ENCODE measurements at regions of chr1 and their contacts with region 1.

Region 1: GRCh38 chr1:205255941-205256780 is 28.4 kb downstream of the TMCC2 start:
- DNase-seq: peak; percentile 86 to 96 (median 94)
- ATAC-seq: peak; percentile 98 to 100 (median 98)
- H3K4me3 ChIP-seq: no peak overlapping the region
- H3K27ac ChIP-seq: no peak overlapping the region
- H3K4me1 ChIP-seq: no peaks in the 10 kb centered on the region
- H3K27me3 ChIP-seq: no peaks in the 10 kb centered on the region
- CTCF ChIP-seq: peak; percentile 86 to 95 (median 92)

Region 2: DNA sequence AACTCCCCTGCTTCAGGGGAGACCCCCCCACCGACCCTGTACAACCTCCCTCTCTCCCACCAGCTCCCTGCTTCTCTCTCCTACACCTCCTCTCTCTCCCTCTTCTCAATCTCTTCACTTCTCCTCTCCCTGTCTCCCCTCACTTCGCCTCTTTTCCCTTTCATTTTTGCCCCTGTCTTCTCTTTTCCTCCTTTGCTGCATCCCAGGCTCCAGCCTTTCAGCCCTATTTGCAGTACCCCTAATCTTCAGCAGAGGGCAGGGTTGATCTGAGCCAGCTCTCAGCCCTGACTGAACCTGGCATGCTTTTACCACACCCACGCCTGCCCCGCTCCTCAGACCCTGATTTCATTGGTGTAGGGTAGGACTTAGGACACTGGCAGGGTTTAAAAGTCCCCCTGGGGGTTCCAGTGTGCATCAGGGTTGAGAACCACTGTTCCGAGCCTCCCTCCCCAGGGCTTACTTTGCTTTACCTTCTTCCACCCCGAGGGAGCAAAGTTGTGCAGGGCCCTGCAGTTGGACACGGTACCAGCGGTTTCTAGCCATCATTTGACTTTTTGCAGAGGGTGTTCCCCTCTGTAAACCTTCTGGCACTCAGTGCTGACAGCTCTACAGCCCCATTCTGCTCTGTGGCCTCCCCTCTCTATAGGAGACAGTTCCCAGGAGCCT is 280.5 kb before region 1 on chr1:
- intact Hi-C with region 1: loop called in 2 of 3 experiments (anchors 5 kb)
- DNase-seq: peak in 4 of 6 donors; percentile 45 to 70 (median 57)
- ATAC-seq: peak; percentile 68 to 93 (median 90)
- H3K4me3 ChIP-seq: no peak overlapping the region
- H3K27ac ChIP-seq: no peak overlapping the region
- H3K4me1 ChIP-seq: no peaks in the 10 kb centered on the region
- H3K27me3 ChIP-seq: no peaks in the 10 kb centered on the region
- CTCF ChIP-seq: peak; percentile 63 to 78 (median 73)

Region 3: DNA sequence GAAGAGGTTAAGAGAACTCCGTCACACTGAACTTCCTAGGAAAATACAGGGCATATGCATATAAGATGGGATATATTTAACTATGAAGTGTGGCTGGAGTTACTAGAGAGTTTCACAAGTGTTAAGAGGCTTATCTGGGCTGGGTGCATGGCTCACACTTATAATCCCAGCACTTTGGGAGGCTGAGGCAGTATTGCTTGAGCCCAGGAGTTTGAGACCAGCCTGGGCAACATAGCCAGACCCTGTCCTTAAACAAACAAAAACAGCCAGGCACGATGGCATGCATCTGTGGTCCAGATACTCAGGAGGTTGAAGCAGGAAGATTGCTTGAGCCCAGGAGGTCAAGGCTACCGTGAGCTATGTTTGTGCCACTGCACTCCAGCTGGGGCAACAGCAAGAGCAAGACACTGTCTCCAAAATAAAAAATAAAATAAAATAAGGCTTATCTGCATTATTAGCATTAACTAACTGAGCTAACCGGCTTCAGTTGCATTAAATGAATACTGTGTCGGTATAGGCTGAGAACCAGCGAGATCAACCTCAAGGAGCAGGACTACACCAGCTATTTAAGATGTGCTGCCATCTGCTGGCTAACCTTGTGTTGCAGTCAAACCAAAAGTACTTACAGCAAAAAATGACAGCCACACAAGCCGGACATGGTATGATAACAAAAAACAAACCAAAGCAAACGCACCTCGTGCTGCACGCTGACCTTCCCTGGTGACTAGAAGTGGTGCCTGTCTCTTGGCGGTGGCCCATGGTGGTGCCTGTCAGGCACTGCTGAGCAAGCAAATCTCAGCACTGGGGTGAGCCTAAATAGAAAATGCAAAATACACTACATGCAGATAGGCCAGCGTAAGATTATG is 114.7 kb before region 1 on chr1:
- intact Hi-C with region 1: loop called in 1 of 3 experiments (anchors 10 kb)
- DNase-seq: peak; percentile 53 to 77 (median 67)
- ATAC-seq: peak; percentile 82 to 94 (median 92)
- H3K4me3 ChIP-seq: peak overlapping the region in 1 of 4 donors; percentile 8
- H3K27ac ChIP-seq: peak overlapping the region in 1 of 4 donors; percentile 5
- H3K4me1 ChIP-seq: peaks cover 0 to 12% (median 0%) of the 10 kb centered on the region in 3 donors
- H3K27me3 ChIP-seq: no peaks in the 10 kb centered on the region
- CTCF ChIP-seq: peak; percentile 54 to 77 (median 72)

Region 4: DNA sequence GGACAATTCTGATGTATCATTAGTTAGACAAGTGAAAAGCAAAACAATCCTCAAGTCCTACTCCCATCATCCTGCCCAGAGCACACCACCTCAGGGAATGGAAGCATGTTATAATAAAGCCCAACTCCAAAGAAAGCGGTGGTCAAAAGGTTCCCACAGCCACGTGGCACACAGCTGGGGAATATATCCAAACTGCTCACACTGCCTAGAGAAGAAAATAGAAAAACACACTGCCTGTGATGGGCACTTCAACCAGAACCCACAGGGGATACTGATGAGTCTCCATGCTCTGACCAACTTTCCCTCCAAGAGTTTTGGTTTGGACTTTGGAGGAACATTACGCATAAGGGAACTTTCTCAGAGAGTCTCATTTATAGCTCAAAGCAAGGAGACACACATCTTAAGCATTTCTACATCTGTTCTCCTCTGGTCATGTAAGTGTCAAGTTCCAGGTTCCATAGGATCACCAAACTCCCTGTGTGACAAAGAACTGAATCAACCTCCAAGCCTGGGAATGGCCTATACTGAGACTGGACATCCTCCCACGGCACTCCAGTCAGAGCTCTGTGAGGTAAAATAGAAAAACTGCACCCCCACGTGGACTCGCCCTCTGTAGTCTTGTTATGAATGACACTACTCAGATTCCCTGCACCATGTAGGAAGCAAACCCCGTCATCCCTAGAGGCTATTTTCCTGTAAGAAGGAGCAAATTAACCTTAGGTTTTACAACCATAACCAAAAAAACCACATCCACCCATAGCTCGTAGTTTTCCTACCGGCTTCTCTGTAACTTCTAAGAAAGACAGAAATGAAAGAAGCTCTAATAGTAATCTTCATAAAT is 56.9 kb before region 1 on chr1:
- intact Hi-C with region 1: no loop called
- DNase-seq: no peak
- ATAC-seq: no peak
- H3K4me3 ChIP-seq: no peak overlapping the region
- H3K27ac ChIP-seq: no peak overlapping the region
- H3K4me1 ChIP-seq: no peaks in the 10 kb centered on the region
- H3K27me3 ChIP-seq: no peaks in the 10 kb centered on the region
- CTCF ChIP-seq: no peak

Region 5: GRCh38 chr1:205669341-205670149 is 413.4 kb after region 1 on chr1:
- intact Hi-C with region 1: no loop called
- DNase-seq: peak in 1 of 6 donors; percentile 48
- ATAC-seq: peak in 1 of 4 donors; percentile 20
- H3K4me3 ChIP-seq: no peak overlapping the region
- H3K27ac ChIP-seq: no peak overlapping the region
- H3K4me1 ChIP-seq: no peaks in the 10 kb centered on the region
- H3K27me3 ChIP-seq: no peaks in the 10 kb centered on the region
- CTCF ChIP-seq: no peak